ENCODE measurements at regions of chr9 and their contacts with region 1.

Region 1: GRCh38 chr9:36258208-36258988 is at the start of gene GNE:
- DNase-seq: peak; percentile 90

Region 2: DNA sequence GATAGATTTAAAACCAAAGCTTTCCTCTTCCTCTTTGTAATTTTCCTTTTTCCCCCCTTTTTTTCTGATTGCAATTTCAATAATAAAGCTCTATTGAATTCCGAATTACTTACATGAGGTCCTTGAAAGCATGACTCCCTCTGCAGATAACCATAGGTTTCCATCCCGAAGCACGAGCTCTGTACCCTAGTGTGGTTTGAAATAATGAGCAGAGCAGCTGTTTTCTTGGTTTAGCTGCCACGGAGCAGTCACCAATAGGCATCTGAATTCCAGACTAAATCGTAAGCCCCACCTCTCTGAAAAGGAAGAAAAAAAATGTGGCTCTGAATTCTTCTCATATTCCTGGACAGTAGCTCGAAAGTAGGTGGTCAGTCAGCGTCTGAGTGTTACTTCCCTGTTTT is 18.4 kb after region 1 on chr9:
- CTCF ChIA-PET with region 1: interaction called, 3 read pairs
- POLR2A ChIA-PET with region 1: interaction called, 13 read pairs
- DNase-seq: peak; percentile 16

Region 3: GRCh38 chr9:36286388-36286787 is 28.0 kb after region 1 on chr9:
- CTCF ChIA-PET with region 1: no interaction called
- POLR2A ChIA-PET with region 1: interaction called, 10 read pairs
- DNase-seq: no peak

Region 4: GRCh38 chr9:36436909-36437308 is 178.5 kb after region 1 on chr9:
- CTCF ChIA-PET with region 1: no interaction called
- POLR2A ChIA-PET with region 1: no interaction called
- DNase-seq: no peak

Measured in HEK293T (cell line).